ENCODE measurements at regions of chr5 and their contacts with region 1.

Region 1: GRCh38 chr5:62395210-62395950 is 8.3 kb downstream of the DIMT1 start:
- DNase-seq: no peak
- ATAC-seq: no peak
- H3K4me3 ChIP-seq: no peak overlapping the region
- H3K27ac ChIP-seq: no peak overlapping the region
- H3K4me1 ChIP-seq: no peaks in the 10 kb centered on the region
- H3K27me3 ChIP-seq: no peaks in the 10 kb centered on the region
- CTCF ChIP-seq: no peak
- POLR2A ChIP-seq: no peak

Region 2: GRCh38 chr5:62315376-62316175 is 79.8 kb before region 1 on chr5:
- intact Hi-C with region 1: loop called in 1 of 10 experiments (anchors 10 kb)
- DNase-seq: no peak
- ATAC-seq: no peak
- H3K4me3 ChIP-seq: no peak overlapping the region
- H3K27ac ChIP-seq: no peak overlapping the region
- H3K4me1 ChIP-seq: peaks cover 0 to 32% (median 7%) of the 10 kb centered on the region in 12 donors
- H3K27me3 ChIP-seq: no peaks in the 10 kb centered on the region
- CTCF ChIP-seq: no peak
- POLR2A ChIP-seq: no peak

Region 3: DNA sequence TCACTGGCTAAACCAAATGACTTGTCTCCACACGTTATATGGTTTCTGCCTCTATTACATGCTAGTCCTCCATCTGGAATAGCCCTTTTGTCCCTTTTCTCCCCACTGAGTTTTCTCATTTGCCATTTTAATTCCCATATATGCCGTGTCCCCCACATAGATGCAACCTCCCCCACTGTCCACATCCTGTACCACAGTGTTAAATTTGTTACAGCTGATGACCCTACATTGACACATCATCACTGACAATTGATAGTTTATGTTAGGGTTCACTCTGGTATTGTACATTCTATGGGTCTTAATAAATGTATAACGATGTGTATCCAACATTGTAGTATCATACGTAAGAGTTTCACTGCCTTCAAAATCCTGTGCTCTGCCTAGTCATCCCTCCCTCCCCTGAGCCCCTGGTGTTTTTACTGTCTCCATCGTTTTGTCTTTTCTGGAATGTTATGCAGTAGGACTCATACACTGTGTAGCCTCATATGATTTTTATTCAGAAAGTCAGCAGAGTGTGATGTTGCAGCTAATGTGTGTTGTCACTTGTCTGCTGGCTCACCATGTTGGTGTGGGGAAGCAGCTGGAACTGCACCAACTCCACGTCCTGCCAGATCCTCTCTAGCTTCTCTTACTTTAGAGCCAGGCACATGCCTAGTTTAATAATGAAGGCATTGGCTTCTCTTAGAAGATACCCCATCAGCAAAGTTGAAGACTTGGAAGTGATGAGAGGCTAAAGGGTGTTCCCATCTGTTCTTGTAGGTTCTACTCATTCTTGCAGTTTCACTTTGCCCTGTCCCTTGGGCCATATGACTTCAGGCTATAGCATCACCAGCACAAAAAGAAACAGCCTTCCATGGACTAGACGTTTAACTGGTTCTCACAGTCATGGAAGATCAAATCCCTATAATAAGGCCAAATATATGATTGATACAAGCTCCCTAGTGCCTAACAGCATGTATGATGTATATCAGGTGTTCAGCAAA is 213.4 kb after region 1 on chr5:
- intact Hi-C with region 1: no loop called
- DNase-seq: peak in 2 of 5 donors; percentile 10 to 38
- ATAC-seq: peak in 3 of 4 donors; percentile 54 to 65 (median 59)
- H3K4me3 ChIP-seq: no peak overlapping the region
- H3K27ac ChIP-seq: no peak overlapping the region
- H3K4me1 ChIP-seq: peaks cover 0 to 4% (median 0%) of the 10 kb centered on the region in 12 donors
- H3K27me3 ChIP-seq: no peaks in the 10 kb centered on the region
- CTCF ChIP-seq: no peak
- POLR2A ChIP-seq: no peak

Measured in heart left ventricle (tissue), 16 donors.